Upper lobe of right lung (tissue), 1 donor: ENCODE measurements at regions of chr6 and their contacts with region 1.

Region 1: GRCh38 chr6:26064619-26065257 is 22.5 kb upstream of the HFE start:
- DNase-seq: no peak
- ATAC-seq: peak; percentile 89
- H3K4me3 ChIP-seq: no peak overlapping the region
- H3K27ac ChIP-seq: no peak overlapping the region
- H3K4me1 ChIP-seq: peaks cover 3% of the 10 kb centered on the region
- H3K27me3 ChIP-seq: no peaks in the 10 kb centered on the region
- CTCF ChIP-seq: peak; percentile 78

Region 2: GRCh38 chr6:26097268-26097875 is 32.6 kb after region 1 on chr6:
- intact Hi-C with region 1: loop called (anchors 5 kb)
- DNase-seq: no peak
- ATAC-seq: peak; percentile 95
- H3K4me3 ChIP-seq: no peak overlapping the region
- H3K27ac ChIP-seq: no peak overlapping the region
- H3K4me1 ChIP-seq: no peaks in the 10 kb centered on the region
- H3K27me3 ChIP-seq: no peaks in the 10 kb centered on the region
- CTCF ChIP-seq: peak; percentile 77